ENCODE measurements at regions of chr2 and their contacts with region 1.

Region 1: DNA sequence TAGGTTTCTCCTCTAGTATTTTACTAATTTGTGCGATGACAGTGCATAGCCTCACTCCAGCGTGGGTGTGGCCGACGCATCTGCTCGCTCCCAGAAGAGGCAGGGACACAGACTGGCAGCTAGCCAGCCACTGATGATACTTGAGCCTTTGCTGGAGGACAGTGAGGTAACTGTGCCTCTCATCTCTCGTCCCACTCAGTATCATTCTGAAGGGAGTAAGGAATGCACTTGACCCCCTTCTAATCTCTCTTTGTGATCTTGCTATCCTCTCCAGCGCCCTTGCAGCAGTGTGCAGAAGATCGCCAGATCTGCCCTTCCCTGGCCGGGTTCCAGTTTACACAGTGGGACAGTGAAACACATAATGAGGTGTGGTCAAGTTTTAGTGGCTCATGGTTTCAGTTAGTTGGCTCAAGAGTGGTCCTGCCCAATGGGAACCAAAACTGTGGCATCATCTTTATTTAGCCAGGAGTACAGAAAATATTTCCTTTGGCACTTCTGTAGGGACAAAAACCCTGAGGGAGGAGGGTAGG is 17.5 kb downstream of the NCAPH start:
- DNase-seq: peak; percentile 69 to 87 (median 80)
- ATAC-seq: peak; percentile 16 to 66 (median 48)
- H3K4me3 ChIP-seq: peak overlapping the region in 1 of 12 donors; percentile 28
- H3K27ac ChIP-seq: peak overlapping the region in 11 of 12 donors; percentile 39 to 89 (median 67)
- H3K4me1 ChIP-seq: peaks cover 0 to 34% (median 17%) of the 10 kb centered on the region in 12 donors
- H3K27me3 ChIP-seq: no peaks in the 10 kb centered on the region
- CTCF ChIP-seq: no peak
- POLR2A ChIP-seq: no peak

Region 2: DNA sequence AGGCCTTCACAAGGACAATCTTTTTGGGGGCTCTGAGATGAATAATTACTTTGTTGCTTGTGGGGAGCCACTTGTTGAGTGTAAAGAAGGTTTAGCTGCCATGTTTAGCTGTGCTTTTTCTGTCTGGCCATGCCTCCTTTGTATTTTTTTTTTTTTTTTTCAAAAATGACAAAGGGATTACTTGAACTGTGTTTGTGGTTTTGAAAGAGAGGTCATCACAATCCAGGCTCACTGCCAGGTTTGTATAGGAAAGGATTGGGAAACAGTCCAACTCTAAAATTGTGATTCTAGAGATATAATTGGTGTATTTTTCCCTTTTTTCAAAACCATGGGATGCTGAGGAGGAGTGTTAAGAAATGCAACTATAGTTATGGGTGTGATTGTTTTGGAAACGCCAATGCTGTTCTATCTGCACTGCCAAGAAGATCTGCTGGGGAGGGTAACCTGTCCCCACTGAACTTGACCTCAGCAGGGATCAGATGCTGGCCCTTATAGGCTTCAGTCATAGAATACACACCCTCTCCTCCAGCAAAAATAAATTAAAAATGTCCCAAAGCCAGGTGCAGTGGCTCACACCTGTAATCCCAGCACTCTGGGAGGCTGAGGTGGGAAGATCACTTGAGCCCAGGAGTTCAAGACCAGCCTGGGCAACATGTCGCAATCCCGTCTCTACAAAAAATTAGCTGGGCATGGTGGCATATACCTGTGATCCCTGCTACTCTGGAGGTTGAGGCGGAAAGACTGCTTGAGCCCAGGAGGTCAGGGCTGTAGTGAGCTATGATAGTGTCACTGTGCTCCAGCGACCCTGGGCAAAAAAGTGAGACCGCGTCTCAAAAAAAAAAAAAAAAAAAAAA is 23.5 kb before region 1 on chr2:
- intact Hi-C with region 1: loop called in 1 of 10 experiments (anchors 1 kb)
- DNase-seq: peak in 1 of 5 donors; percentile 35
- ATAC-seq: no peak
- H3K4me3 ChIP-seq: no peak overlapping the region
- H3K27ac ChIP-seq: peak overlapping the region in 3 of 12 donors; percentile 28 to 40 (median 34)
- H3K4me1 ChIP-seq: peaks cover 0 to 48% (median 18%) of the 10 kb centered on the region in 12 donors
- H3K27me3 ChIP-seq: peaks cover 0 to 12% (median 0%) of the 10 kb centered on the region in 9 donors
- CTCF ChIP-seq: no peak
- POLR2A ChIP-seq: no peak

Region 3: GRCh38 chr2:96537066-96537733 is 184.1 kb after region 1 on chr2:
- intact Hi-C with region 1: no loop called
- DNase-seq: peak; percentile 61 to 92 (median 78)
- ATAC-seq: peak in 3 of 4 donors; percentile 0 to 33 (median 11)
- H3K4me3 ChIP-seq: peak overlapping the region; percentile 84 to 99 (median 97)
- H3K27ac ChIP-seq: peak overlapping the region; percentile 85 to 100 (median 98)
- H3K4me1 ChIP-seq: peaks cover 19 to 88% (median 76%) of the 10 kb centered on the region in 12 donors
- H3K27me3 ChIP-seq: no peaks in the 10 kb centered on the region
- CTCF ChIP-seq: no peak
- POLR2A ChIP-seq: no peak

Measured in heart left ventricle (tissue), 16 donors.